ENCODE measurements at regions of chr2 and their contacts with region 1.

Region 1: GRCh38 chr2:149597668-149598326 is 10.2 kb upstream of the MMADHC start:
- DNase-seq: peak; percentile 67
- H3K4me3 Mint-ChIP-seq: no peak overlapping the region
- H3K27ac Mint-ChIP-seq: no peak overlapping the region
- H3K4me1 Mint-ChIP-seq: peaks cover 17% of the 10 kb centered on the region
- H3K27me3 Mint-ChIP-seq: peaks cover 2% of the 10 kb centered on the region

Region 2: DNA sequence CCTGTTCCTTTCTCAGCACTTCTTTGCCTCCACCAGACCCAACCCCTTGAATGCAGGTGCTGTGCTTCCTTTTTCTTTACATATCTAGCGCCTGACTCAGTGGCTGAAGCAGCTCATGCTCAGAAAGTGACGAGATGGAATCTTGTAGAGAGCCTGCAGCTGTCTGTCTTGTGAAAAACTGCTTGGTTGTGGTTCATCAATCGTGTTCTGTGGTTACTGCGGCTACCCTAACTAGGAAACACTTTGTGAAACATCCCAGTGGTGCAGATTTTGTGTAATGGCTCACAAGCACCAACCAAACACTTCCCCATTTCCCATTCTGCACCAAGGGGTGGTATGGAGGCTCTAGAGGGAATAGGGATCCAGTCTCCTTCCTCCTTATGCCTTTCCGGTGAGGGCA is 297.0 kb after region 1 on chr2:
- CTCF ChIA-PET with region 1: no interaction called
- intact Hi-C with region 1: no loop called
- DNase-seq: no peak
- H3K4me3 Mint-ChIP-seq: no peak overlapping the region
- H3K27ac Mint-ChIP-seq: no peak overlapping the region
- H3K4me1 Mint-ChIP-seq: no peaks in the 10 kb centered on the region
- H3K27me3 Mint-ChIP-seq: no peaks in the 10 kb centered on the region

Region 3: DNA sequence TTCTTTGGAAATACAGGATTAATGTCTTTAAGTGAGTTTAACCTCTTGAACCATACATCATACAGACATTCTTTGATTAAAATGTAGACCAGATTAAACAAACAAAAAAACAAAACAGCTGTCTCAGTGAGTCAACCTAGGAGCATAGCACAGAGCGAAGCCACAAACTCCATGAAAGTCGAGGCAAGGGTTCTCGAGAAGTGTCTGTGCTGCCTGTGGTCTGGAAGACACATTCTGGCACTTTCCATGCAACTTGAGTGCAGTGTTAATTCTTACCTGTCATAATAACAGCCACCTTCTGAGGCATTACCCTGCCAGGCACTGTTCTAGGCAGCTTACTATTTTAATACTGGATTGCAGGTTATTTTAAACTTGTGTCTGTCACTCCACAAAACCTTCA is 425.2 kb after region 1 on chr2:
- CTCF ChIA-PET with region 1: no interaction called
- intact Hi-C with region 1: loop called (anchors 10 kb)
- DNase-seq: peak; percentile 28
- H3K4me3 Mint-ChIP-seq: no peak overlapping the region
- H3K27ac Mint-ChIP-seq: no peak overlapping the region
- H3K4me1 Mint-ChIP-seq: no peaks in the 10 kb centered on the region
- H3K27me3 Mint-ChIP-seq: no peaks in the 10 kb centered on the region

Region 4: GRCh38 chr2:150610671-150611279 is 1013.0 kb after region 1 on chr2:
- CTCF ChIA-PET with region 1: no interaction called
- intact Hi-C with region 1: loop called (anchors 1 kb)
- DNase-seq: no peak
- H3K4me3 Mint-ChIP-seq: no peak overlapping the region
- H3K27ac Mint-ChIP-seq: no peak overlapping the region
- H3K4me1 Mint-ChIP-seq: no peaks in the 10 kb centered on the region
- H3K27me3 Mint-ChIP-seq: peaks cover 2% of the 10 kb centered on the region

Region 5: GRCh38 chr2:151238527-151239487 is 1641.0 kb after region 1 on chr2:
- CTCF ChIA-PET with region 1: interaction called, 6 read pairs
- intact Hi-C with region 1: loop called (anchors 1 kb)
- DNase-seq: peak; percentile 43
- H3K4me3 Mint-ChIP-seq: no peak overlapping the region
- H3K27ac Mint-ChIP-seq: no peak overlapping the region
- H3K4me1 Mint-ChIP-seq: peaks cover 2% of the 10 kb centered on the region
- H3K27me3 Mint-ChIP-seq: no peaks in the 10 kb centered on the region